ENCODE measurements at regions of chr6 and their contacts with region 1.

Region 1: DNA sequence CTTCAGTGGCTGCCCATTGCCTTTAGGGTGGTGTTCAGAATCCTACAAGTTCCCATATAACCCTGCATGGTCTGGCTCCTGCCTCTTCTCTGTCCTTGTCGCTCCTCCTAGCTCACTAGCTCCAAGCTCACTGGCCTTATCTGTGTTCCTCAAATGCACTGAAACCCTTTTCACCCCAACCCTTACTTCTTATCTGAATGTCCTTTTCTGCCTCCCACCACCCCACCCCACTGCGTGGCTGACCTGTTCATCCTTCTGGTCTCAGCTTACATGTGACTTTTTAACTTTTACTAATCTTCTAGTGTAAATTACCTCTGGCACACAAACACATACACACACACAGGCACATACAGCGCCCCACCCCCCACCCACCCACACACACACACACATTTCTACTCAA is 41.0 kb upstream of the GLP1R start:
- DNase-seq: no peak
- ATAC-seq: no peak
- H3K4me3 Mint-ChIP-seq: no peak overlapping the region
- H3K27ac Mint-ChIP-seq: no peak overlapping the region
- H3K4me1 Mint-ChIP-seq: no peaks in the 10 kb centered on the region
- H3K27me3 Mint-ChIP-seq: peaks cover 44% of the 10 kb centered on the region

Region 2: DNA sequence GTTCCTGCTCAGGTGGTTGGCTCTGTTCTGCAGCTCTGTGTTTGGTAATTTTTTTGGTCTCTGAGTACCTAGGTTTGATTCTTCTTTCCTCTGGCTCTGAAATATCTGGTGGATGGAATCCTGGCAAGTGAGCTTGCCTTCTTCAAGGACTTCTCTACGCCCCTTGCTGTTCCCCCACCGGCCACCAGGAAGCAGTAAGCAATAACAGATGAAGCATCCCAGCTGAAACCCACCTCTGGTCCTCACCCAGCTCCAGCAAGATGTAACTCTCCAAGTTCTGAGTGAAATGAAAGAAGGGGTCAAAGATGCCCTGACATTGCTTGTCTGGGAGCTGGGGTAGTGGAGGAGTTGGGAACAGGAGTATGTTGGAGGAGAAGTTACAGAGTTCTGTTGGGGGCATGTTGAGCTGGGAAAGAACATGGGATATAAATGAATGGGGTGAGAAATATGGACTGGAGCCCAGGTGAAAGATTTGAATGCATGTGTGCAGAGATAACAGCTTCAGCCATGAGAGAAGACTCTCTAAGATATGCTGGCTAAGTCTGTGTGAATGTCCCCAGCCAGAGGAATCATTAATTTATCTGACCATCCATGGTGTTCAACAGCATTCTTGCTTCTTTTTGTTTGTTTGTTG is 10.3 kb before region 1 on chr6:
- CTCF ChIA-PET with region 1: interaction called, 20 read pairs
- POLR2A ChIA-PET with region 1: no interaction called
- DNase-seq: peak; percentile 35
- ATAC-seq: no peak
- H3K4me3 Mint-ChIP-seq: no peak overlapping the region
- H3K27ac Mint-ChIP-seq: no peak overlapping the region
- H3K4me1 Mint-ChIP-seq: no peaks in the 10 kb centered on the region
- H3K27me3 Mint-ChIP-seq: peaks cover 41% of the 10 kb centered on the region

Measured in activated CD8-positive, alpha-beta T cell treated with anti-CD3 and anti-CD28 coated beads, Interleukin-2, amount 10 ng/mL, durations not matched to agents 7 days and 5 days (primary cell).